Breast epithelium (tissue), 4 donors: ENCODE measurements at regions of chr18 and their contacts with region 1.

Region 1: DNA sequence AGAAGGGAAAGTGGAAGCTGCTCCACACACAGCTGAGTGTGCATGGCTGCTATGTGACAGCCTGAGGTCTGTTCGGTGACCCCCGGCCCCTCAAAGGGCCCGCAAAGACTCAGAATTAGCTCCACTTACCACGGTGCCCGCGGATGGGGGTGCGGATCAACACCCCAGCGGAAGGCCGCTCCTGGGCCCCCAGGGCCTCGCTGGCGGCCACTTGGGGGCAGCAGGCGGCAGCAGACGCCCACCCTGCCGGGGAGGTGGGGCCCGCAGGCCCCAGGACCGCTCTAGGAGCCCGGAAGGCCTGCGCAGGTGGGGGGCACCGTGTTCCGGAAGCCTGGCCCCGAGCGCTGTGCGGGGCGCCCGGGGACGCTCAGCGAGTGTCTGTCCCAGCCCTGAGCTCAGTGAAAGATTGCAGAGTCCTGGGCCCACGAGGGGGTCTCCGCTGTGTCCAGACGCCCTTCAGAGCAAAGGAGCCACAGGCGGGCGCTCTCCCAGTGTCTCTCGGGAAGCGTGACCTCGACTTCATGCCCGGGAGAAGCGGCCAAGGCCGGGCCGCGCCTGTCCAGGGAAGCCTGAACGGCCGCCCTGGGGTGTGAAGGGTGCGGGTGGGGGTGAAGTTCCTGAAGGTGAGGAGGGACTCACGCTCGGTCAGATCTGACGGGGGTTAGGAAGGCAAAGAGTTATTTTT is 118.7 kb downstream of the VAPA start:
- DNase-seq: no peak
- H3K4me3 ChIP-seq: no peak overlapping the region
- H3K27ac ChIP-seq: no peak overlapping the region
- H3K4me1 ChIP-seq: peaks cover 0 to 8% of the 10 kb centered on the region in 2 donors
- H3K27me3 ChIP-seq: no peaks in the 10 kb centered on the region
- CTCF ChIP-seq: no peak
- POLR2A ChIP-seq: no peak

Region 2: DNA sequence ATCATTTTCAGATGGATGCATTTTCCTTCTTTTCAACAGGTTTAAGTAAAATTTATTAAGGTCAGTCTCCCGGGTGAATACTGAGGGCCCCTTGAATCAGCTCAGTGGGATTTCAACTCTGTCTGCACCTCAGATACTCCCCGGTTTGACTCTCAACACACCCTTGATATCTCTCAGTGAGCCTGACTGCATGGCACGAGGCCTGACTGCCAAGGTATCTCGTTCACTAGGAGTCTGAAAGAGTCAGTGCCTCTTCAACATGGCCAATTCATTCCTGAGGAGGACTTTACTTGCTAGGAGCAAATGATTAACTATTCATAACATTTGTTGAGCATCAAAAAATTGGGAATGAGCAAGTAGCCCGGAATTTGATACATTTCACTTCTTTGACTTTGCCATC is 37.8 kb before region 1 on chr18:
- intact Hi-C with region 1: loop called (anchors 1 kb)
- DNase-seq: no peak
- H3K4me3 ChIP-seq: no peak overlapping the region
- H3K27ac ChIP-seq: no peak overlapping the region
- H3K4me1 ChIP-seq: no peaks in the 10 kb centered on the region
- H3K27me3 ChIP-seq: no peaks in the 10 kb centered on the region
- CTCF ChIP-seq: no peak
- POLR2A ChIP-seq: no peak